Naive thymus-derived CD8-positive, alpha-beta T cell (primary cell): ENCODE measurements at regions of chr2 and their contacts with region 1.

Region 1: DNA sequence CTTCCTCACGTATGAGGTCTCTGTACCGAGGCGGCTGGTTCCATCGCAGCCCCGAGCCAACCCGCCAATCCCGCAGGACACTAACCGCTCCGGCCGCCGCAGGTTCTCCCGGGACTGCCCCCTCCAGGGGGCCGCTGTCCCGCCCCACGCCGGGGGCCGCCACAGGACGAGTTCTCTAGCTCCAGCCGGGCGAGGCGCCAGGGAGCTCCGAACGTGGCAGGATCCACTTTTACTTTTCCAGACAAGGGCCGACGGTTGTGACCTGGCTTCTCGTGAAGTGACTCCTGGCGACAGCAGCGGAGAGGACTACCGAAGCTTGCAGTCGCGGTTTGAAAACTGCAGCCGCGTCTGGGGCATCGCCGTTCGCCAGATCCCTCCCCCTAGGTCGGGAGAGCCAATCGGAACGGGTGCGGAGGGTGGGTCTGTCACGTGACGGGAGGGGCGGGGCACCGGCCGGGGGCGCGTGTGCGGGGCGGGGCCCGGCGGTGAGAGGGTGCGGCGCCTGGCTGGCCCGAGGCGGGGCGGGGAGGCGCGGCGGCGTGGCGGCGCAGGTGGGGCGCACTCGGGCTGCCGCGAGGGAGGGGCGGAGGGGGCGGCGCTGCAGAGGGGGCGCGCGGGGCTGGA is at the start of gene STK17B:
- DNase-seq: peak; percentile 89 to 99 (median 96)
- ATAC-seq: peak; percentile 56 to 57
- H3K4me3 Mint-ChIP-seq: peak within 1 kb of the TSS; percentile 93 to 99 (median 96)
- H3K27ac Mint-ChIP-seq: peak within 1 kb of the TSS; percentile 94 to 99 (median 96)
- H3K4me1 Mint-ChIP-seq: peaks cover 26 to 51% (median 35%) of the 10 kb centered on the region in 4 donors
- H3K27me3 Mint-ChIP-seq: no peaks in the 10 kb centered on the region
- polyA plus RNA-seq, gene STK17B: 73.5 to 98.3 (median 91.9) TPM

Region 2: DNA sequence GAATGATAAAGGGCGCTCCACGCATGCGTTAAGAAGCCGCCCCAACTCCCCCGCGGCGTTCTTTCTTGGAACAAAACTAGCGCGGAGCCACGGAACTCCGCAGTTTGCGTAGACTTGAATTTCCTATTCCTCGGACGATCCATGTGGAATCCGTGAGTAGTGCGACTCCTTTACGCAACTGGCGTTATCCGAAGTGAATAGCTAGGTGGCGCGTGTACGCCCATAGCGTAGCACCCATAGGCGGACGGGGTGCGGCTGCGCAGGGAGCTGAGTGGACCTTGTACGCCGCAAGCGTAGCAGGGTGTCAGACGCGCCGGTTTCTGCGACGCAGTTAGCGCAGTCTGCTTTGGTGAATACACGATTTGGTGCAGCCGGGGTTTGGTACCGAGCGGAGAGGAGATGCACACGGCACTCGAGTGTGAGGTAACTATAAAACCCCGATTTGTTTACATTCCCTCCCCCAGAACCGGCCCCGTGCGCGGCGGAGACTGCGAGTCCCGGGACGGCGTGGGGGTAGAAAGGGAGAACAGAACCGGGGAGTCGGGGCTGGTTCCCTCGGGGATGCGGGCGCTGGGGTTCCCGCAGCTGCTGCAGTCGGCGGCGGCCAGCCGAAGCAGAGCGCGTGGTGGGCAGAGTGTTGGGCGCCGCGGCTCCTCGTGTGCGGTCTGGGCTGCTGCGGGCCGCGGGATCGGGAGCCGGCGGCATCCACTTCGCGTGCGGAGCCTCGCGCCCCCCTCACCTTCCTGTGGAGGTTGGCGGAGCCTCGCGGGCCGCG is 514.3 kb before region 1 on chr2 and contains the start of gene SLC39A10:
- POLR2A ChIA-PET with region 1: interaction called, 10 read pairs
- DNase-seq: peak; percentile 90 to 100 (median 98)
- ATAC-seq: peak; percentile 69 to 76
- H3K4me3 Mint-ChIP-seq: peak within 1 kb of the TSS; percentile 92 to 100 (median 98)
- H3K27ac Mint-ChIP-seq: peak within 1 kb of the TSS; percentile 99 to 100 (median 100)
- H3K4me1 Mint-ChIP-seq: peaks cover 19 to 47% (median 29%) of the 10 kb centered on the region in 4 donors
- H3K27me3 Mint-ChIP-seq: peaks cover 0 to 3% (median 0%) of the 10 kb centered on the region in 5 donors
- polyA plus RNA-seq, gene SLC39A10: 8.1 to 14.6 (median 12.6) TPM

Region 3: DNA sequence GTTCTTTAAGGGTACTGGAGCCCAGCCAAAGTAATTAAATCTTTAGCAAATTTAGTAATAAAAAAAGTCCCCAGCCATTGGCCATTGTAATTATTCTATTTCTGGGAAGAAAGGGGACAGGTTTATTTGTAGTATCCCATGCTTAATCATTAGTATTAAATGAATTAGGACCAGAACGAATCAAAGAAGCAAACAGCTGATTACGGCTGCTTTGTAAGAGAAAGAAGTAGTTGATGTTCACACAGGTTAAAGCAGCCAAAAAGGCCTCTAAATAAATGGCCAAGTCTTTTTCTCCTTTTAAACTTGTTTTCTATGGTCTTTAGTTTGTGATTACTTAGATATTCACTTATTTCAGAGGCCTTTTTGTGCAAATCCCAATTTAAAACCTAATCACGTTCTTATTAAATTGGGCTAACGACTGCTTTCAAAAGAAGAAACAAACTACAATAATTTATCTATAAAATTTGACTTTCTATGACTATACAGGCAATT is 54.1 kb before region 1 on chr2:
- POLR2A ChIA-PET with region 1: no interaction called
- DNase-seq: no peak
- ATAC-seq: no peak
- H3K4me3 Mint-ChIP-seq: no peak overlapping the region
- H3K27ac Mint-ChIP-seq: no peak overlapping the region
- H3K4me1 Mint-ChIP-seq: peaks cover 0 to 16% (median 4%) of the 10 kb centered on the region in 4 donors
- H3K27me3 Mint-ChIP-seq: no peaks in the 10 kb centered on the region

Region 4: DNA sequence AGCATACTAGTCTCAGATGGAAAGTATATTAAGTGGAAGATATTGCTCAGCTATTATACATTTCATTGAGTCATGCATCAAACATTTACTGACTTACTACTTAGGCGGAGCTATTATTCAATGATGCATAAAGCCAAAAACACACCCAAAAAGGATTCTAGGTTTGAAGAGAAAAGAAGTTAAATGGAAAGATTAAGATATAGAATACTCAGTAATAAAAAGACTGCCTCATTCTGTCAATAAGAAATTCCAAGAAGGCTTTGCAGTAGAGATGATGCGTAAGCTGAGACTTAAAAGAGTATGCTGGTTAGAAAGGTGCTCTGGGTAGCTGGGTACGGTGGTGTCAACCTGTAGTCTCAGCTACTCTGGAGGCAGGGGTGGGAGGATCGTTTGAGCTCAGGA is 27.6 kb before region 1 on chr2:
- POLR2A ChIA-PET with region 1: interaction called, 70 read pairs
- DNase-seq: peak in 2 of 10 donors; percentile 4 to 15
- ATAC-seq: peak in 1 of 2 donors; percentile 20
- H3K4me3 Mint-ChIP-seq: peak overlapping the region in 9 of 10 donors; percentile 20 to 77 (median 72)
- H3K27ac Mint-ChIP-seq: peak overlapping the region; percentile 74 to 95 (median 90)
- H3K4me1 Mint-ChIP-seq: peaks cover 24 to 89% (median 73%) of the 10 kb centered on the region in 4 donors
- H3K27me3 Mint-ChIP-seq: no peaks in the 10 kb centered on the region

Region 5: DNA sequence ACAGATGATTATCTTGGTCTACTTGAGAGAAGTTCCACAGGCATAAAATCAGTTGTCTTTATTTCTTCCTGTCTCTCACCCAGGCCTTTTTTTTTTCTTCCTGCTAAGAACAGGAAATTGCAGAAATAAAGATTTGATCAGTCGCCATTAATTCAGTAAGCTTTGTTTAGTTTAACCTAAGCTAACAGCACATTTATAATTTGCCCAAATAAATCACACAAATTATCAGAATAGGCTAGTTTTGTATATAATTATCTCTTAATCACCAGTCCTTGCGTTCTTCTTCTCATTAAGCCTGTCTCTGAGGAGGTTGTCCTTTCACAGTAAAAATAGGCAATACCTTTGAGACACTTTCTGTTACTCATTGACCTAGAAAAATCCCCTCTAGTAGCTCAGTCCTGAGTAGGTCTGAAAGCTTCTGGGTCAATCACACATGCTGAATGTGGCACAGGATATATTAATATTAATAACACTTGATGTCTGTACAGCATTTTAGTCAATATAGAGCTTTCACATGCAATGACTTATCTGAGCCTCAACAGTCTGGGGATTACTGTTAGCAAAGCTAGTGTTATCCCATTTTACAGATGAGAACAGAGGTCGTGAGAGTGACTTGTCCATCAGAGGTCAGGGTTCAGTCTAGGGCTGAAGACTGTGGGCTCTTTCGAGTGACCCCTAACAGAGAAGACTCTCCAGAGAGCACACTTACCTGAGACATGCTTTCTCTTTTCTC is 11.2 kb after region 1 on chr2:
- POLR2A ChIA-PET with region 1: interaction called, 83 read pairs
- DNase-seq: peak in 3 of 10 donors; percentile 30 to 39 (median 36)
- ATAC-seq: peak; percentile 19 to 26
- H3K4me3 Mint-ChIP-seq: peak overlapping the region; percentile 45 to 74 (median 62)
- H3K27ac Mint-ChIP-seq: peak overlapping the region; percentile 92 to 98 (median 95)
- H3K4me1 Mint-ChIP-seq: peaks cover 36 to 91% (median 83%) of the 10 kb centered on the region in 4 donors
- H3K27me3 Mint-ChIP-seq: no peaks in the 10 kb centered on the region

Region 6: DNA sequence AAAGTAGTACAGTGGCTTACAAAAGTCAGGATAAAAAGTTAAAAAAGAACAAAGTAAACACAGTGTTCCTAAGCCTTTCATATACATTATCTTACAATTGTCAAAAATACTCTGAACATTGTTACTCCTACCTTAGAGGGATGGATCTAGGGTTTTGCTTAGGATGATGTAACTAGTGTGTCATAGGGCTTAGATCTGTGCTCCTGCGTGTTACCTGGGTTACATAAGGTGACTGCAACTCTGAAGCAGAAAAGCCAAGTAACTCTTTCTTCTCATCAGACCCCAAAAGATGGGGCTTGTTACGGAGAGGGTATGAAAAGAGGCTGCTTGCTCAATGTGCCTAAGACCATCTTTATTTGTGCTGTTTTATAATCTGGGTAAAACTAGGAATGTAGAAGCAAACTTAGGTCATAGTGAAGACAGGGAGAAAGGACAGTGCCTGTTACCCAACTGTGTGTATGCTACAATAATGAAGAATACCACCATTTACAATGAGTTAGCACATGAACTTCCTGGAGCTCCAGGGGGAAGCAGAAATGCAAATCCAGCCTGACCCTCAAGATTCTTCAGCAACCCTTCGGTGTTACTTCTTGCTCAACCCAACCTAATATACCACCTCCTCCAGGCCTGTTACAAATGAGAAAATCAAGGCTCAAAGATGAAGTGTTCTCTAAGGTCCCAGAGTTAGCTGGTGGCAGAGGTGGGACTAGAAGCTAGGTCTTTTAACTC is 42.1 kb after region 1 on chr2:
- POLR2A ChIA-PET with region 1: interaction called, 193 read pairs
- DNase-seq: peak in 6 of 10 donors; percentile 26 to 71 (median 64)
- ATAC-seq: peak; percentile 35 to 64
- H3K4me3 Mint-ChIP-seq: peak overlapping the region in 8 of 10 donors; percentile 10 to 98 (median 61)
- H3K27ac Mint-ChIP-seq: peak overlapping the region; percentile 92 to 100 (median 99)
- H3K4me1 Mint-ChIP-seq: peaks cover 23 to 89% (median 85%) of the 10 kb centered on the region in 4 donors
- H3K27me3 Mint-ChIP-seq: no peaks in the 10 kb centered on the region

Region 7: DNA sequence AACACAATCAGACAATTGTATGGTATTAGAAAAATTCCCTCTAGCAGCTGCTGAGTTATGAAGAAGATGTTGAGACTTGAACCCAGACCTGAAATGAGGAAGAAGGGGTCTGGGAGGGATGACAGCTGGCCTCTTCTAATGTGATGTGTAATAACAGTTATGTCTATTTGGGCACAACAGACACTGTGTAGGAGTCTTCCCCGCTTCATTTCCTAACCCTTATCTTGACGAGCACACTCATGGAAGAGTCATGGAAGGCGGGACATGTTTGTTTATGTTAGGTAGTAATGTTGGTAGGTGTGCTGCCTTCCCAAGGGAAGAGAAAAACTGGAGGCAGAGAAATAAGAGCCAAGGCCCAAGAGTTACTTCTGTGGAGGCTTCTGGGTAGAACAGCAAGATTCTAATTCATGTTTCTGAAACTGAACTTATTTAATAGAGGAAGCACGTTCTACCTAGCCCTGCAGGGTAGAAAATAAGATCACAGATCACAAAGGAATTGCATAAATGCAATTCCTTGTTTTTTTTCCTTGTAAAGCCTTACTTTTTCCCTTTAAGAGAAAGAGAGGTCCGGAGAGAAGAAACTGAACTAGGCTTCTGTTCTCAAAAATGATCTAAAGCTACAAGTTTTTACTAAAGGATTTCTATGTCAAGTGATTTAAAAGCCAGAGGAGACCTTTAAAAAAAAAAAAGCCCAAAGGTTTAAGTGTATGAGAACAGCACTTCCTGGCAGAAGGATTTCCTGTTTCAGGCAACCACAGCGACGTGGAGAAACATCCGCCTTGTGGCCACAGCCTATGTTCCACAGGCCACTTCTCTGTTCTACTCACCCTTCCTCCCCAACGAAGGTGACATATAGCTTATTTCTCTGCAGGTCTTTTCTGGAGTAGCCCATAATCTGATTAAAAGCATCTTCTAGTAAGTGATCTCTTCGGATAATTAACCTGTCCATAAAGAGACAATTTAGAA is 68.5 kb after region 1 on chr2:
- POLR2A ChIA-PET with region 1: interaction called, 42 read pairs
- DNase-seq: peak; percentile 36 to 92 (median 82)
- ATAC-seq: peak; percentile 79 to 88
- H3K4me3 Mint-ChIP-seq: peak overlapping the region; percentile 60 to 89 (median 76)
- H3K27ac Mint-ChIP-seq: peak overlapping the region; percentile 90 to 99 (median 97)
- H3K4me1 Mint-ChIP-seq: peaks cover 36 to 88% (median 78%) of the 10 kb centered on the region in 4 donors
- H3K27me3 Mint-ChIP-seq: no peaks in the 10 kb centered on the region